WTC11 (cell line): ENCODE measurements at regions of chr19 and their contacts with region 1.

Region 1: DNA sequence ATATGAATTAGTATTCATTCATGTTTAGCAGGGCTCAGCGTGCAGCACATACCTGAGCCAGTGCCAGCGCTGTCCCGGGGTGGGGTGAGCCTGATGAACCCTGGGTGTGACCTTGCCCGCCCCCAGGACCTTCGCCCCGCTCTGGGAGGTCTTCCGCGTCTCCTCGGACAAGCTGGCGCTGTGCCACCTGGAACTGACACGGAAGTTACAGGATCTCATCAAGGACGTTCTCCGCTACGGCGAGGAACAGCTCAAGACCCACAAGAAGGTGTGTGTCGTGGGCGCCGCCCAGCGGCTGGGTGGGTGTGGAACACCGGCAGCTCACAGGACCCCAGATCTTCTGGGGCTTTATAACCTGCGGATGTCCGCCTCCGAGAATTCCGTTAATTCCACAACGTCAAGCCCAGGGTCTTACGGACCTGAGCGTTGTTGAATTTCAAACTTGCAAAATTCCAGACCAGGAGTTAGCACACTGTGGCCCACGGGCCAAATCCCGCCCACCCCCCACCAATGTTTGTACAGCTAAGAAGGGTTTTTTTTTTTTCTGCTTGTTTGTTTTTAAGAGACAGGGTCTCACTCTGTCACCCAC is 15.4 kb downstream of the FCHO1 start:
- DNase-seq: peak; percentile 94
- ATAC-seq: peak; percentile 79
- H3K4me3 Mint-ChIP-seq: peak overlapping the region; percentile 41
- H3K27ac Mint-ChIP-seq: no peak overlapping the region
- H3K4me1 Mint-ChIP-seq: peaks cover 12% of the 10 kb centered on the region
- H3K27me3 Mint-ChIP-seq: no peaks in the 10 kb centered on the region
- CTCF ChIP-seq: peak; percentile 59; the same call in 1 of the 2 replicates

Region 2: DNA sequence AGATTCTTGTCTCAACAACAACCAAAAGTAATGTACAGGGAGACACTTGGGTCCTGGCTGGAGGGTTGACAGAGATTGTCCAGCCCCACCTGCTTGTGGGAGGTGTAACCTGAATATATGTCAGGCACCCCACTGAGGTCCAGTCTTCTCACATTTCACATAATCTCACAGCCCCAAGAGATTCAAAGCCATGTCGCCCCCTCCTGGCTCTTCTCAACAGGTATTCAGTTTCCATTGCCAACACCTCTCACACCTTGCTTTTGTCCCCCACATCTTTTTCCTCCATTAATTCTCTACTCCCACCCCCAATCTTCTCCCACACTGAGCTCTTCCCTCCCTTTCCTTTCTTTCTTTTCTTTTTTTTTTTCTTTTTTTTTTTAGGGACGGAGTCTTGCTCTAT is 89.6 kb before region 1 on chr19:
- CTCF ChIA-PET with region 1: interaction called, 11 read pairs
- POLR2A ChIA-PET with region 1: no interaction called
- DNase-seq: peak; percentile 45
- ATAC-seq: no peak
- H3K4me3 Mint-ChIP-seq: no peak overlapping the region
- H3K27ac Mint-ChIP-seq: no peak overlapping the region
- H3K4me1 Mint-ChIP-seq: peaks cover 34% of the 10 kb centered on the region
- H3K27me3 Mint-ChIP-seq: no peaks in the 10 kb centered on the region
- CTCF ChIP-seq: no peak

Region 3: GRCh38 chr19:17718947-17719711 is 47.5 kb before region 1 on chr19 and contains the start of gene MAP1S:
- CTCF ChIA-PET with region 1: interaction called, 17 read pairs
- POLR2A ChIA-PET with region 1: no interaction called
- DNase-seq: peak; percentile 89
- ATAC-seq: peak; percentile 95
- H3K4me3 Mint-ChIP-seq: peak within 1 kb of the TSS; percentile 85
- H3K27ac Mint-ChIP-seq: peak within 1 kb of the TSS; percentile 90
- H3K4me1 Mint-ChIP-seq: peaks cover 27% of the 10 kb centered on the region
- H3K27me3 Mint-ChIP-seq: no peaks in the 10 kb centered on the region
- CTCF ChIP-seq: no peak
- total RNA-seq, gene MAP1S: 115 to 124 TPM (median 120 TPM) in 3 replicates

Region 4: DNA sequence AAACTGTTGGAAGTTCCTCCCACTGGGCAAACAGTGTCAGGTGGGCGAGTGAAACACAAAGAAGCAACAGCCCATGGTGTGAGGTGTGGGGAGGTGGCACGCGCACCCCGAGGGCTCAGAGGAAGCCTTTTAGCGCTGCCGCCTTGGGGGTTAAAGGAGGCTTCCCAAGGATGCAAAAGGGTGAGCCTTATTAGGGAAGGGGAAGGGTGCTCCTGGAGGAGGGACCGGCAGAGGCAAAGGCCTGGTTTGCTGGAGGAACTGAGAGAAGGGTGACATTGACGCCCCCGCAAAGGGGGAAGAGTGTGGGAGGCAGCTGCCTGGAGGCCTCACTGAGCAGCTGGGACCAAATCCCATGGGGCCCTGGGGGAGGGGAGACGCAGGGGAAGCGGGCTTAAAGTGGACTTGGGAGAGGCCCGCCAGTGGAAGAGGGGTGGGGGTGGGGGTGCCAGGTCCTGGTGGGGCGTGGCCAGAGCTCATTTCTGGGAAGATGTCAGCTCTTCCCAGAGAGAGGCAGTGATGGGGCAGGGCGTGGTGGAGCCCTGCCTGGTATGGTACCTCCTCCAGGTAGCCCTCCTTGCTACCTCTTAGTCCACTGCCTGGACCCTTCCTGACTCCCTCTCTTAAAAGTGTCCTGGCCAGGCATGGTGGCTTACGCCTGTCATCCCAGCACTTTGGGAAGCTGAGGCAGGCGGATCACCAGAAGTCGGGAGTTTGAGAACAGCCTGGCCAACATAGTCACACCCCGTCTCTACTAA is 27.3 kb before region 1 on chr19:
- CTCF ChIA-PET with region 1: interaction called, 11 read pairs
- POLR2A ChIA-PET with region 1: interaction called, 3 read pairs
- DNase-seq: no peak
- ATAC-seq: peak; percentile 55
- H3K4me3 Mint-ChIP-seq: no peak overlapping the region
- H3K27ac Mint-ChIP-seq: no peak overlapping the region
- H3K4me1 Mint-ChIP-seq: peaks cover 5% of the 10 kb centered on the region; the same call in 1 of the 2 replicates
- H3K27me3 Mint-ChIP-seq: peaks cover 4% of the 10 kb centered on the region; the same call in 1 of the 2 replicates
- CTCF ChIP-seq: no peak

Region 5: DNA sequence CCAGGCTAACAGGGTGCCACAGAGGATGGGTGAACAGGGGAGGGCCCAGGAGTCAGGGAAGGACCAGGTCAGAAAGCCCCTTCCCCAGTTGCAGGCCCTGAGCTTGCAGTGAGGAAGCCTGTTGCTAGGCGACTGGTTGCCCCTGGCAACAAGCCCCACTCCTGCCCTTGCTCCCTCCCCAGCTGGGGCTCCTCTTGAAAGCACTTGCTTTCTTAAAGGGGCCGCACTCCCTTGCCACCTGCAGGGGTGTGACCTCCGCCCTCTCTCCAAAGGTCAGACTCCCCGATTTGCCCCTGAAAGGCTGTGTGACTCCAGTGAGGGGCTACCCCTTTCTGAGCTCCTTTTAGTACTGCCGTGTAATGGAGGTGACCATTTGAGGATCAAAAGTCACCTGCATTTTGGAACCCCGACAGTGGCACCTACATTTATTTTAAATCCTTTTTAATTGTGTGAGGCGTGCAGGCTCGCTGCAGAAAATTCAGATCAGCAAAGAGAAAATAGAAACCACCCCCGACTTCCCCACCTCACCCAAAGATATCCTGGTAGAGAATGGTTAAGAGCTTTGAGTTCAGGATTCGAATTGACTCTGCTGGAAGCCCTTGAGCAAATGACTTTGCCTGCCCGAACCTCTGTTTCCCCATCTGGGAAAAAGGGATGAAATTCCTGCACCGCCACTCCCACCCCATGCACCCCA is 10.5 kb before region 1 on chr19:
- CTCF ChIA-PET with region 1: interaction called, 48 read pairs
- POLR2A ChIA-PET with region 1: interaction called, 3 read pairs
- DNase-seq: peak; percentile 86
- ATAC-seq: peak; percentile 81
- H3K4me3 Mint-ChIP-seq: no peak overlapping the region
- H3K27ac Mint-ChIP-seq: no peak overlapping the region
- H3K4me1 Mint-ChIP-seq: peaks cover 25% of the 10 kb centered on the region
- H3K27me3 Mint-ChIP-seq: no peaks in the 10 kb centered on the region; the same call in 1 of the 2 replicates
- CTCF ChIP-seq: no peak